PC-3 (cell line): ENCODE measurements at regions of chr2 and their contacts with region 1.

Region 1: GRCh38 chr2:47174733-47175361 is 19.7 kb upstream of the STPG4 start:
- DNase-seq: peak; percentile 85
- ATAC-seq: peak; percentile 6; the same call in 1 of the 2 replicates
- H3K4me3 ChIP-seq: peak overlapping the region; percentile 97
- H3K27ac ChIP-seq: peak overlapping the region; percentile 61
- H3K4me1 ChIP-seq: peaks cover 53% of the 10 kb centered on the region
- H3K27me3 ChIP-seq: no peaks in the 10 kb centered on the region
- CTCF ChIP-seq: no peak

Region 2: GRCh38 chr2:46915811-46916630 is 258.8 kb before region 1 on chr2:
- CTCF ChIA-PET with region 1: no interaction called
- POLR2A ChIA-PET with region 1: interaction called, 3 read pairs
- intact Hi-C with region 1: loop called (anchors 5 kb)
- DNase-seq: peak; percentile 92
- ATAC-seq: peak; percentile 77
- H3K4me3 ChIP-seq: peak overlapping the region; percentile 79
- H3K27ac ChIP-seq: peak overlapping the region; percentile 79
- H3K4me1 ChIP-seq: peaks cover 39% of the 10 kb centered on the region
- H3K27me3 ChIP-seq: no peaks in the 10 kb centered on the region
- CTCF ChIP-seq: no peak

Region 3: DNA sequence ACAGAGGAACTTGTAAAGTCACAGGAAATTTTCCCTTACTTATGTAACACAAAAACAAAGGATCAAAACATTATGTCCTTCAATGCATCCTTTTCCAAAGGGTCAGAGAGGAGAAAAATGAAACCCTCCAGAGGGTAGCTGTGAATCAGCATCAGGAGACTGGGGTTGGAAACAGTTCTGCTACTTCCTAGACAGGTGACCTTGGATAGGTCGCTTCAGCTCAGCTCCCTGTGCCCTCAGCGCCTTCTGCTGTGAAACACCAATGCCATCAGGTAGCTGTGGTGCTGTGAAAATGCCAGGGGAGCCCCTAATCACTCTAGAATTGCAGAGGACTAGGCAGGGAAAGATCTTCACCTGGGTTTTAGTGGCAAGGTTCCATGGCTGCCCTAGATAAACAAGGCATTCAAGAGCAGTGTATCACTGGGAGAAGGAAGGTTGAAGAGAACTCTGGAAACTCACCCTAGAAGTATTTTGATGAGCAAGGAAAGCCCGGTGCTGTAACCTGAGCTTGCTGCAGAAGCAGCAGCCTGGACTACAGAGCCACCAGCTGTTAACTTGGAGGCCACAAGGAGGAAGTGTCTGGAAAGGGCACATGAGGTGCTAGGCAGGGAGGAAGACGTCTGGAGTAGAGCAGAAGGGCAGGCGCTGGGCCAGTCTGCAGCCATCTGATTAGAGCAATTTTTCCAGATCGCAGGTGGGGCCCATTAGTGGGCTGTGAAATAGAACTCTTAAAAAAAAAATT is 158.5 kb before region 1 on chr2:
- CTCF ChIA-PET with region 1: interaction called, 6 read pairs
- POLR2A ChIA-PET with region 1: no interaction called
- intact Hi-C with region 1: loop called (anchors 5 kb)
- DNase-seq: peak; percentile 95
- ATAC-seq: peak; percentile 97
- H3K4me3 ChIP-seq: no peak overlapping the region
- H3K27ac ChIP-seq: peak overlapping the region; percentile 61
- H3K4me1 ChIP-seq: peaks cover 27% of the 10 kb centered on the region
- H3K27me3 ChIP-seq: no peaks in the 10 kb centered on the region
- CTCF ChIP-seq: peak; percentile 46

Region 4: DNA sequence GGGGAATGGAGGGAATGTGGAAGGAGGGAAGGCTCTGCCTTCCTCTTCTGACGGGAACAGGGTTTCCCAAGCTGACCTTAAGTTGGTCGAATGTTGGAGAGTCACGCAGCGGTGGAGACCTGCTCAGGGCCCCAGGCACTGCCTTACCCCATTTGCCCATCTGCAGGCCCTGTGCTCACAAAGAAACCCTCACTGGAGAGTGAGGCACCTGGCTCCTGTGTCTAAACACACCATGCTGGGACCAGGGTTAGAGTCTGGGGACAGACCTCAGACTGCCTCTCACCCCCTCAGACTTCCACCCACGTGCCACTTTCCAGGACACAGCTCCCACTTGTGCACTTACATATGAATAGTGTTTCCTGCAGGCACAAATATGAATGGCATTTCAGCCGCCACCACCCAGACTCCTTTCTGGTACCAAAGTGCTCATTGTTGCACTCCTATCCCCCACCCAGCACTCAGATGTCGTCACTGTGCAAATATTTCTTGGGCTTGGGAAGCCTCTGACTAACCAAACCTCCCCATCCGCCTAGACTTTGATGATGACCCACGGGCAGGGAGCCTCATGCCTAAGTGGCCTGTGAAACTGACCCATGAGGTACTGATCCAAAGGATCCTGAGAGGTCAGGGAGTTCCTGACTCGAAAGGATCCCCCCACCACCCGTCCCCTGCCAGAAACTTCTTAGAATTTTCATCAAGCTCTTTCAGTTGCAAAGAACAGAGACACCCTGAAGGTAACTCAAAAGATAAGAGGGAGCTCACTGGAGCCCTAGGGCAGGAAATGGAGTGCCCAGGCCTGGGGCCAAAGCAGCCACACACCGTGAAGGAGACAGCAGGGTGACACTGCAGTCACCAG is 98.0 kb before region 1 on chr2:
- CTCF ChIA-PET with region 1: no interaction called
- POLR2A ChIA-PET with region 1: no interaction called
- intact Hi-C with region 1: loop called (anchors 2 kb)
- DNase-seq: peak; percentile 99
- ATAC-seq: peak; percentile 95
- H3K4me3 ChIP-seq: no peak overlapping the region
- H3K27ac ChIP-seq: peak overlapping the region; percentile 86
- H3K4me1 ChIP-seq: peaks cover 43% of the 10 kb centered on the region
- H3K27me3 ChIP-seq: no peaks in the 10 kb centered on the region
- CTCF ChIP-seq: no peak

Region 5: DNA sequence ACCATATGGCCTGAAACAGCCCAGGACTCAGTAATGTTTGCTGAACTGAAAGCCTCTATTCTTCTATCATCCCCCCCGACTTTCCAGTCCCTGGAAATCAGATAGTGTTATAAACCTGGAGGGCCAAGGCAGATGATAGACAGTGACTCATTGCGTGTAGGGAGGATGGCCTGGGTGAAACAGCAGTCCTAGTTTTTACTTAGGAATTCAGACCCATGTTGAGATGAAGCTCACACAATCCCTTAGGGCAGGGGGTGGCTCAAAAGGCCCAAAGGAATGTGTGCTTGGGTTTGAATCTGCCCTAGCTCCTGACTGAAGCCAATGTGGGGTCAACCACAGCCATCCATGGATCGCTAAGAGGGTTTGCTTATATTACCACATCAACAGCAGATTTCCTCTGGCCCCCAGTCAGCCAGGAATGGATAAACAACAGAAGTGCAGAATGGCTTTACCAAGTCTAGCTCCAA is 24.2 kb after region 1 on chr2:
- CTCF ChIA-PET with region 1: interaction called, 3 read pairs
- POLR2A ChIA-PET with region 1: interaction called, 21 read pairs
- intact Hi-C with region 1: no loop called
- DNase-seq: peak; percentile 96
- ATAC-seq: peak; percentile 63
- H3K4me3 ChIP-seq: no peak overlapping the region
- H3K27ac ChIP-seq: peak overlapping the region; percentile 55
- H3K4me1 ChIP-seq: peaks cover 70% of the 10 kb centered on the region
- H3K27me3 ChIP-seq: no peaks in the 10 kb centered on the region
- CTCF ChIP-seq: no peak

Region 6: DNA sequence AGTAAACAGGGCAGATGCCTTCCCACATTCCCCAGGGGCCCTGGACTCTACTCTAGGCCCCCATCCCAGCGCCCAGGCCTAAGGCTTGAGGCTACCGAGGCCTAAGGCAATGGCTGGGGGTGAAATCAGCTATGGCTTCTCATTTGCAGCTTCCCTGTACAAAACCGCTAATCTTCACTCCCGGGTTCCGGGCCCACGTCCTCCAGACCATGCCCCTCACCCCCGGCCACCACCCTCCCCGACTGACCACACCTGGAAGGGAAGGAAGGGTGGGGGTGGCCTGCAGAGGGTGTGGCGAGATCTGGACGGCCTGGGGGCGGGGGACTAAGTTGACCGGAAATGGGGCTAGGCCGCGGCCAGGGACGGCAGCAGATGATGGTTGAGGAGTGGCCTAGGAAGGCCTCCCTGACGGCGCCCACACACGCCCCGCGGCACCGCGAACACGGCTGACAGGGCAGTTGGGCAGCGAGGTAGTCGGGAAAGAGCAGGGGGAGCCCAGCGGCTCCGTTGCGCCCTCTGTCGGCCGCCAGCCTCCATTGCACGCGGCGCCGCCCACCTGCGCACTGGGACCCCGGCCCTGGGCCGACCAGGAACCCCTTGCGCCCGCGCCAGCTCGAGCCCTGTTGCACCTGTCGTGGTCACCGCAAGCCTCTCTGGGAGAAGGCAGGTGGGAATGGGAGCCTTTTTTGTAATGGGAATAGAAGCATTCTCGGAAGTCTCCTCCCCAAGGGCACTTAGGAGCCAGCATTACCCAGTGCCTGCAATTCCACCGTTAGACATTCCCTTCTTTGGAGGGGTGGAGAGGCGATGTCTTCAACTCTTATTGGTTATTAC is 97.4 kb after region 1 on chr2:
- CTCF ChIA-PET with region 1: interaction called, 8 read pairs
- POLR2A ChIA-PET with region 1: interaction called, 6 read pairs
- intact Hi-C with region 1: loop called (anchors 1 kb)
- DNase-seq: peak; percentile 70
- ATAC-seq: peak; percentile 62
- H3K4me3 ChIP-seq: peak overlapping the region; percentile 63
- H3K27ac ChIP-seq: peak overlapping the region; percentile 87
- H3K4me1 ChIP-seq: peaks cover 47% of the 10 kb centered on the region
- H3K27me3 ChIP-seq: no peaks in the 10 kb centered on the region
- CTCF ChIP-seq: peak; percentile 96